ENCODE measurements at regions of chr1 and their contacts with region 1.

Region 1: DNA sequence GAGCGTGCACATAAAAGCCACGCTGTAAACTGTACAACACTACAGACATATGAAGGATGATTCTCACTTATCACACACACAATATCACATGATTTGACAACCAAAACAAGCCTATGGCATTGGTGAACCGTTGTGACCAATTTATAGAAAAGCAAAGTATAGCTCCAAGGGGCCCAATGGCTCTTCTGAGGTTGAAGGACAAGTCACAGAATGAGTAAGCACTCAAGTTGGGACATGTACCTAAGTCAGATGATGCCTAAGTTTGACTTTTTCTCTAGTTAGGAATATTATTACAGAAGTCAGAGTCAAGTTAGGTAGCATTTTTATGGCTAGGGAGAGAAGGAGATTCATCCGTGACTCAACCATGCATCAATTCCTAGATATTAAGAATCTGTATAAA is 45.7 kb downstream of the PLPP3 start:
- DNase-seq: no peak
- H3K4me3 ChIP-seq: no peak overlapping the region
- H3K27ac ChIP-seq: 0 out of 2 replicates have a peak overlapping the region, but pooled peaks have one; percentile 6
- H3K4me1 ChIP-seq: peaks cover 12 to 60% (median 53%) of the 10 kb centered on the region in 4 experiments
- H3K27me3 ChIP-seq: no peaks in the 10 kb centered on the region
- CTCF ChIP-seq: no peak
- EP300 ChIP-seq: no peak
- POLR2A ChIP-seq: no peak
- RAD21 ChIP-seq: no peak

Region 2: GRCh38 chr1:56566061-56566744 is 32.6 kb after region 1 on chr1:
- CTCF ChIA-PET with region 1: interaction called, 4 read pairs
- POLR2A ChIA-PET with region 1: interaction called, 10 read pairs
- DNase-seq: no peak
- H3K4me3 ChIP-seq: 0 out of 8 replicates have a peak overlapping the region, but pooled peaks of 1 of the 4 experiments have one; percentile 9
- H3K27ac ChIP-seq: peak overlapping the region; percentile 17; the same call in 1 of the 2 replicates
- H3K4me1 ChIP-seq: peaks cover 4 to 44% (median 37%) of the 10 kb centered on the region in 4 experiments; a peak in 6 of 7 replicates
- H3K27me3 ChIP-seq: no peaks in the 10 kb centered on the region
- CTCF ChIP-seq: no peak
- EP300 ChIP-seq: no peak
- POLR2A ChIP-seq: no peak
- RAD21 ChIP-seq: no peak

Region 3: DNA sequence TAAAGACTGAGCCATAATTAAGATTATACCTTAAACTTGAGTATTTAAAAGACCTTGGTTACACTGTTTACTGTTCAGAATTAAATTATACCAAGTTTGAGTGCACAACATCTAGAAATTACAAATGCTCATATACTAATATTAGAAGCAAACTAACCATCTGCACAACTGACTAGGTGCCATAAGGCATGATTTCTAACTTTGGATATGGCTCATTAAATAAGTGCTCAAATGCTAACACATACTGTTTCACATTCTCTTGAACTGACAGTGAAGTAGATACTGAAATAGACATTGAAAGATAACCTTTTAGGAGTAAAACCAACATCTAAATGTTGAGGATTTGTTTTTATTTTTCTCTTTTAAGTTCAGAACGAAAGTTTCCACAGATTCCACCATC is 185.6 kb after region 1 on chr1:
- CTCF ChIA-PET with region 1: no interaction called
- POLR2A ChIA-PET with region 1: no interaction called
- DNase-seq: no peak
- H3K4me3 ChIP-seq: no peak overlapping the region
- H3K27ac ChIP-seq: no peak overlapping the region
- H3K4me1 ChIP-seq: no peaks in the 10 kb centered on the region
- H3K27me3 ChIP-seq: no peaks in the 10 kb centered on the region
- CTCF ChIP-seq: no peak
- EP300 ChIP-seq: no peak
- POLR2A ChIP-seq: no peak
- RAD21 ChIP-seq: no peak

Measured in H1 (cell line).